Activated CD4-positive, alpha-beta T cell treated with anti-CD3 and anti-CD28 coated beads for 36 hours (primary cell): ENCODE measurements at regions of chr2 and their contacts with region 1.

Region 1: GRCh38 chr2:26469092-26469710 is 8.7 kb downstream of the OTOF start:
- DNase-seq: peak; percentile 88
- ATAC-seq: peak; percentile 80
- H3K4me3 Mint-ChIP-seq: no peak overlapping the region
- H3K27ac Mint-ChIP-seq: no peak overlapping the region
- H3K4me1 Mint-ChIP-seq: no peaks in the 10 kb centered on the region
- H3K27me3 Mint-ChIP-seq: no peaks in the 10 kb centered on the region

Region 2: DNA sequence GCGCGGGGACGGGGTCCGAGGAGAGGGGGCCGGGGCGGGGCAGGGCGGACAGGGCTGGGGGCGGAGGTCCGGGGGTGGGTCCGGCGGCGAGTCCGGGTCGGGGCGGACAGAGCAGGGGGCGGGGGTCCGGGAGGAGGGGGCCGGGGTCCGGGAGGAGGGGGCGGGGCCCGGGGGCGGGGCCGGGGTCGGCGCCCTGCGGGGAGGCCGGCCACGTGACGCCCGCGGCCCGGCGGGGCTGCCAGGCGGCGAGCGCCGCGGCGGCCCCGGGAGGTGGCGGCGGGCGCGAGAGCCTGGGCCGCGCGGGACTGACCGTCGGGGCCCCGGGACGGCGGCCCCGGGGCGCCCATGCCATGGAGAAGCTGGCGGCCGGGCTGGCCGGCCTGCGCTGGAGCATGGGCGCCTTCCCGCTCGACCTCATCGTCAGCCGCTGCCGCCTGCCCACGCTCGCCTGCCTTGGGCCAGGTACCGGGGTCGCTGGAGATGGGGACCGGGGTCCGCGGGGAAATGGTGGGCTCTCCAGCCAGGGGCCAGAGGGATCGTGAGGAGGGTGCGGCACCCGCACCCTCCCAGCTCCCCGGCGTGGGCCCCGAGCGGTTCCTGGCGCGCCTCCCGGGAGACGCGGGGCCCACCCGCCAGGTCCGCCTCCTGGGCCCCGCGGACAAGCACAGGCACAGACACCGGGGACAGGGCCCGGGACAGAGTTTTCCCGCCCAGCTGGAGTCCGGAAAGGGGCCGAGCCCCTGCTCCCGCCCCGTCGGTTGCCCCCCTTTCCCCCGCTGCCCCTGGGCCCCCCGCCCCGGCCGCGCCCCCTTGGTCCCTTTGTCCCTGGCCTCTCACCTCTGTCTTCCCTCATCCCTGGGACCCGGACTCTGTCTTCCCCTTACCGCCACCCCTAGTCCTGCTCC is 296.1 kb before region 1 on chr2 and contains the start of gene GAREM2:
- CTCF ChIA-PET with region 1: no interaction called
- POLR2A ChIA-PET with region 1: no interaction called
- intact Hi-C with region 1: loop called (anchors 2 to 10 kb)
- DNase-seq: no peak
- ATAC-seq: peak; percentile 14
- H3K4me3 Mint-ChIP-seq: peak within 1 kb of the TSS; percentile 67
- H3K27ac Mint-ChIP-seq: no peak within 1 kb of the TSS
- H3K4me1 Mint-ChIP-seq: peaks cover 5% of the 10 kb centered on the region
- H3K27me3 Mint-ChIP-seq: peaks cover 26% of the 10 kb centered on the region
- total RNA-seq, gene GAREM2: 3.2 to 5.7 TPM

Region 3: GRCh38 chr2:26178746-26179436 is 290.3 kb before region 1 on chr2:
- CTCF ChIA-PET with region 1: no interaction called
- POLR2A ChIA-PET with region 1: no interaction called
- intact Hi-C with region 1: loop called in 1 of 2 experiments (anchors 10 kb)
- DNase-seq: peak; percentile 39
- ATAC-seq: peak; percentile 57
- H3K4me3 Mint-ChIP-seq: peak overlapping the region; percentile 43
- H3K27ac Mint-ChIP-seq: peak overlapping the region; percentile 25
- H3K4me1 Mint-ChIP-seq: peaks cover 10% of the 10 kb centered on the region
- H3K27me3 Mint-ChIP-seq: peaks cover 31% of the 10 kb centered on the region

Region 4: GRCh38 chr2:26299471-26300101 is 169.6 kb before region 1 on chr2:
- CTCF ChIA-PET with region 1: no interaction called
- POLR2A ChIA-PET with region 1: no interaction called
- intact Hi-C with region 1: loop called in 1 of 2 experiments (anchors 10 kb)
- DNase-seq: peak; percentile 51
- ATAC-seq: peak; percentile 56
- H3K4me3 Mint-ChIP-seq: no peak overlapping the region
- H3K27ac Mint-ChIP-seq: no peak overlapping the region
- H3K4me1 Mint-ChIP-seq: no peaks in the 10 kb centered on the region
- H3K27me3 Mint-ChIP-seq: no peaks in the 10 kb centered on the region

Region 5: GRCh38 chr2:26792720-26793119 is 323.5 kb after region 1 on chr2:
- CTCF ChIA-PET with region 1: no interaction called
- POLR2A ChIA-PET with region 1: no interaction called
- intact Hi-C with region 1: no loop called
- DNase-seq: no peak
- ATAC-seq: no peak
- H3K4me3 Mint-ChIP-seq: no peak overlapping the region
- H3K27ac Mint-ChIP-seq: no peak overlapping the region
- H3K4me1 Mint-ChIP-seq: peaks cover 3% of the 10 kb centered on the region
- H3K27me3 Mint-ChIP-seq: peaks cover 6% of the 10 kb centered on the region